Mammary epithelial cell (primary cell): ENCODE measurements at regions of chr7 and their contacts with region 1.

Region 1: GRCh38 chr7:78226059-78226719 is 427.6 kb downstream of the PHTF2 start:
- DNase-seq: peak; percentile 1
- H3K4me3 ChIP-seq: no peak overlapping the region
- H3K27ac ChIP-seq: no peak overlapping the region
- H3K4me1 ChIP-seq: no peaks in the 10 kb centered on the region
- H3K27me3 ChIP-seq: no peaks in the 10 kb centered on the region
- CTCF ChIP-seq: peak; percentile 30 to 57

Region 2: DNA sequence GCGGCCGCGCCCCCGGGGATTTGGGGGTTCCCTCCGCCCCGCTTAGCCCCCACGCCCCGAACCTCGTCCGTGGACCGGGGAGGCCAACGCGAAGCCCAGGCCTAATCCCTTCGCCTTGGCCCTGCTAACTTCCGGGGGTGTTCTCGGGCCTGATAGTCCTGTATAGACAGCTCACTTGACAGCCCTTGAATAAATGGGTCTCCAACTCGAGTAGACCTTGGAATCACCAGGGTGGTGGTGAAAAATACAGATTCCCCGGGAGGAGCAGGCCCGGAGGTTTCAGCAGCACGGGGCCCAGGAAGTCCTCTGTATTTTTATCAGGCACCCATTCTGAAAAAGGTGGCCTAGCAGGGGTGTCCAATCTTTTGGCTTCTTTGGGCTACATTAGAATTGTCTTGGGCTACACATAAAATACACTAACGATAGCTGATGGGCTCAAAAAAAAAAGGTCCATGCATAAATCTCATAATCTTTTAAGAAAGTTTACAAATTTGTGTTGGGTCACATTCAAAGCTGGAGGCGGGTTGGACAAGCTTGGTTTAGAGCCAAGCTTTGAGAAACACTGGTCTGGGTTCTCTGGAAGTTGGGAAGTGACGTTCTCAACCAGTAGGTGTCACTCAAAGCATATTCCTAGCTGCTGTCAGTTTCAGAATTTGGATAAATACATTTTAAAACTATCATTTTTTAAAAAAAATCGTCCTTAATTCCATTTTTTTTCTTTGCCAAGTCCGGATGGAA is 205.9 kb before region 1 on chr7:
- CTCF ChIA-PET with region 1: no interaction called
- dilution Hi-C with region 1: no loop called
- in situ Hi-C with region 1: no loop called
- intact Hi-C with region 1: loop called (anchors 1 kb)
- DNase-seq: peak; percentile 60
- H3K4me3 ChIP-seq: peak overlapping the region in 1 of 3 experiments; percentile 53
- H3K27ac ChIP-seq: no peak overlapping the region
- H3K4me1 ChIP-seq: peaks cover 7% of the 10 kb centered on the region
- H3K27me3 ChIP-seq: peaks cover under 1% of the 10 kb centered on the region
- CTCF ChIP-seq: peak; percentile 65 to 77

Region 3: GRCh38 chr7:78090616-78091015 is 135.6 kb before region 1 on chr7:
- CTCF ChIA-PET with region 1: no interaction called
- dilution Hi-C with region 1: no loop called
- in situ Hi-C with region 1: no loop called
- intact Hi-C with region 1: loop called (anchors 1 kb)
- DNase-seq: no peak
- H3K4me3 ChIP-seq: no peak overlapping the region
- H3K27ac ChIP-seq: no peak overlapping the region
- H3K4me1 ChIP-seq: peaks cover under 1% of the 10 kb centered on the region
- H3K27me3 ChIP-seq: peaks cover 3% of the 10 kb centered on the region
- CTCF ChIP-seq: peak in 1 of 2 donors; percentile 39

Region 4: GRCh38 chr7:78134256-78134655 is 91.9 kb before region 1 on chr7:
- CTCF ChIA-PET with region 1: no interaction called
- dilution Hi-C with region 1: no loop called
- in situ Hi-C with region 1: no loop called
- intact Hi-C with region 1: loop called (anchors 1 kb)
- DNase-seq: peak; percentile 23
- H3K4me3 ChIP-seq: no peak overlapping the region
- H3K27ac ChIP-seq: no peak overlapping the region
- H3K4me1 ChIP-seq: no peaks in the 10 kb centered on the region
- H3K27me3 ChIP-seq: no peaks in the 10 kb centered on the region
- CTCF ChIP-seq: peak; percentile 47 to 50

Region 5: GRCh38 chr7:78164459-78164858 is 61.7 kb before region 1 on chr7:
- CTCF ChIA-PET with region 1: no interaction called
- dilution Hi-C with region 1: no loop called
- in situ Hi-C with region 1: no loop called
- intact Hi-C with region 1: no loop called
- DNase-seq: no peak
- H3K4me3 ChIP-seq: no peak overlapping the region
- H3K27ac ChIP-seq: no peak overlapping the region
- H3K4me1 ChIP-seq: no peaks in the 10 kb centered on the region
- H3K27me3 ChIP-seq: no peaks in the 10 kb centered on the region
- CTCF ChIP-seq: no peak

Region 6: GRCh38 chr7:78185149-78185745 is 40.9 kb before region 1 on chr7:
- CTCF ChIA-PET with region 1: no interaction called
- dilution Hi-C with region 1: no loop called
- in situ Hi-C with region 1: no loop called
- intact Hi-C with region 1: no loop called
- DNase-seq: no peak
- H3K4me3 ChIP-seq: no peak overlapping the region
- H3K27ac ChIP-seq: no peak overlapping the region
- H3K4me1 ChIP-seq: no peaks in the 10 kb centered on the region
- H3K27me3 ChIP-seq: peaks cover 6% of the 10 kb centered on the region
- CTCF ChIP-seq: no peak